ENCODE measurements at regions of chr18 and their contacts with region 1.

Region 1: DNA sequence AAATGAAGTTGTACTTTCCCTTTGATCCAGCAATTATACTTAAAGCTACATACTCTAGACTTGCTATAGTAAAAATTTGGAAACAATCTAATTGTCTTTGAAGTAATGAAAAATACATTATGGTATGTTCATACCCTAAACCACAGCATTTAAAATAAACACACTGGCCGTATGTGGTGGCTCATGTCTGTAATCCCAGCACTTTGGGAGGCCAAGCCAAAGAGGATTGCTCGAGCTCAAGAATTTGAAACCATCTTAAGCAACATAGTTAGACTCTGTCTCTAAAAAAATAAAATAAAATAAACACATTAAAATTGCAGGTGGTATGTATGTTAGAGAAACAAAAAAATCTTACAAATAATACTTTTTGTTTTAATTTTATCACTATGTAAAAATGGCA is 208.1 kb upstream of the KLHL14 start:
- DNase-seq: no peak
- H3K4me3 ChIP-seq: no peak overlapping the region
- H3K27ac ChIP-seq: no peak overlapping the region
- H3K4me1 ChIP-seq: no peaks in the 10 kb centered on the region
- H3K27me3 ChIP-seq: no peaks in the 10 kb centered on the region
- CTCF ChIP-seq: no peak

Region 2: DNA sequence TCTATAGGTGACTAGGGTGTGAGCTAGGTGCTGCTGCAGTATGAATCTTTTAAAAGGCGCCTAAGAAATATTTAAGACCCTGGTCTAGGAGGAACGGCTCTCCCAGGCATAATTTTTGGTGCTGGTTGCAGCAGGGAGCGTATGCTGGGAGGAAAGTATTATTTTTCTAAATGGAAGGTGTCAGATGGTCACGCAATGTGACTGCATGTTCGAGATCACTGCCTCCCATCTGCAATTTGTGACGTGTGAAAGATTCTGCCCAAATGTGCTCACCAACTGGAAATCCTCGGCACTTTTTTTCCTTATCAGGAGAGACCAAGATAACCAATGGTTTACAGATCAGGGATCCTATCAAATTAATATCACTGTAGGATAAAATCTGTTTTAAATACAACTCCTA is 112.5 kb before region 1 on chr18:
- CTCF ChIA-PET with region 1: no interaction called
- POLR2A ChIA-PET with region 1: interaction called, 10 read pairs
- intact Hi-C with region 1: no loop called
- DNase-seq: no peak
- H3K4me3 ChIP-seq: no peak overlapping the region
- H3K27ac ChIP-seq: no peak overlapping the region
- H3K4me1 ChIP-seq: no peaks in the 10 kb centered on the region
- H3K27me3 ChIP-seq: no peaks in the 10 kb centered on the region
- CTCF ChIP-seq: no peak

Region 3: GRCh38 chr18:33404244-33404873 is 423.5 kb after region 1 on chr18:
- CTCF ChIA-PET with region 1: no interaction called
- POLR2A ChIA-PET with region 1: no interaction called
- intact Hi-C with region 1: loop called (anchors 10 kb)
- DNase-seq: no peak
- H3K4me3 ChIP-seq: no peak overlapping the region
- H3K27ac ChIP-seq: no peak overlapping the region
- H3K4me1 ChIP-seq: no peaks in the 10 kb centered on the region
- H3K27me3 ChIP-seq: no peaks in the 10 kb centered on the region
- CTCF ChIP-seq: peak; percentile 45; the same call in 1 of the 2 replicates